ENCODE measurements at regions of chr22 and their contacts with region 1.

Region 1: DNA sequence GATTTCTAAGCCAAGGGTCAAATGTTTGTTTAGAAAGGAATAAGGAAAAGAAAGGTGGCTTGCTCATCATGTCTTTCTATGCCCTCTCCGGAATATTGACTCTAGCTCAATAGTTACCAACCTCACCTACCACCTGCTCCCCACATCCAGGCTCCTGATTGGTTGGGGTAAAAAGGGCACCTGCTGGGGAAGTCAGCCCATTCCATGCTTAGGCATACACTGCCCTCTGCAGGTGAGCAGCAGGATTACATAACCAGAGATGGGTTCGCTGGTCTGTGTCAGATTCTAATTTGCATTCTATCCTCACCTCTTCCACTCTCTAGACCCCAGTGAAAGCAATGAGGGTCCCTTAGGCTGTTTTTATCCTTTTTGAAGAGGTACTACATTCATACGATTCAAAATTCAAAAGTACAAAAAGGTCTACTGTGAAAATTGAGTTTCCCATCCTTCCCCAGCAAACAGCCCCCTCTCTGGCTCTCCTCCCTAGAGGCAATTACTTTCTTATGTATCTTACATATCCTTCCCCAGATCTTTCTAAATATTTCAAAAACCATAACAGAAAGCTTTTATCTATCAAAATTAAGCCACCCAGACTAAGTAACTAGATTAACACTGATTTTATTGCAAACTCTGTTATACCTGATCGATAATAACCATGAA is 98.0 kb upstream of the ASPHD2 start:
- DNase-seq: peak in 1 of 2 donors; percentile 64
- ATAC-seq: peak; percentile 72 to 82 (median 76)
- H3K4me3 ChIP-seq: no peak overlapping the region
- H3K27ac ChIP-seq: no peak overlapping the region
- H3K4me1 ChIP-seq: peaks cover 19% of the 10 kb centered on the region
- H3K27me3 ChIP-seq: no peaks in the 10 kb centered on the region
- CTCF ChIP-seq: peak; percentile 88

Region 2: DNA sequence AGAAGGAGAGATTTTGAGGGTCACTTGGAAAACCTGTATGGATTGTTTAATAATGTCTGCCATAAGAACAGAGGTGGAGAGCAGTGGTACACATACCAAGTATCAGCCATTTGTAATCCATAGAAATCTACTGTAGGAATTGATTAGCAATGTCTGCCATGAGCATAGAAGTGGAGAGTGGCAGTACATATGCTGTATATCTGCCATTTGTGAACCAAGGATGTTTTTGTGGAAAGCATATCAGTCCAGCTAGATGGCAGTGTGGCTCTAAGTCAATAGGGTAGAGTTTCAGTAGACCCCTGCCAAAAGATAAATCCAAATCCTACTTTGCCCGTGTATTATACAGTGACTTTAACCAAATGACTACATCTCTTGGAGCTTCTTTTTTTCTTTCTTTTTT is 244.7 kb before region 1 on chr22:
- intact Hi-C with region 1: loop called in 1 of 2 experiments (anchors 10 kb)
- DNase-seq: no peak
- ATAC-seq: peak in 1 of 4 donors; percentile 40
- H3K4me3 ChIP-seq: no peak overlapping the region
- H3K27ac ChIP-seq: no peak overlapping the region
- H3K4me1 ChIP-seq: no peaks in the 10 kb centered on the region
- H3K27me3 ChIP-seq: peaks cover 0 to 21% (median 0%) of the 10 kb centered on the region in 3 donors
- CTCF ChIP-seq: peak; percentile 18

Region 3: DNA sequence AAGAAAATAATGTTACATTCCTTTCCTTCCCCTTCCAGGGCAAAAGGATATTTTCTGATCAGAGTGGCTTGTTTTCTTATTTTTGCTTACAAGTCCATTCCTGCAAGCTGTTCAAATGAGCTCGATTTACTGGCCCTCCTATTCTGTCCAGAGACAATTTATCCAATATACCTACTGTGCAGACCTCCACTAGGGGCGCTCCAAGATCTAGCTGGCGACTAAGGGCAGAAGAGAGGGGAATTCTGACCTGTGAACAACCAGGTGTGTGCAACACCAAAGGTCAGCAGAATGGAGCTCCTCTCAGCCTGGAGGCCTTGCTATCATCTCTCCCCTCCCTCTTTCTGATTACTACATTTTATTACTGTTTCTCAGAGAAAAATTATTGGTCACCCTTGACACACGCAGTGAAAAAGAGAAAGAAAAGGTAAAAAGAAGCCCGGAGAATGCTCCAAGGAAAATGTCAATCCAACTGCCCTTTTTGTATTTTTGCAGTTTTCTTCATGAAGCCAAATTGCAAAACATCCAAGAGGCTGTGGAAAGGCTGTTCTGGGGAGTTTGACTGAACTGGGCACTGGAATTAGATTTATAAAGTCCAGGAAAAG is 158.6 kb before region 1 on chr22:
- intact Hi-C with region 1: loop called (anchors 2 kb)
- DNase-seq: peak; percentile 17 to 58
- ATAC-seq: peak; percentile 56 to 73 (median 64)
- H3K4me3 ChIP-seq: no peak overlapping the region
- H3K27ac ChIP-seq: no peak overlapping the region
- H3K4me1 ChIP-seq: peaks cover 5% of the 10 kb centered on the region
- H3K27me3 ChIP-seq: peaks cover 0 to 58% (median 15%) of the 10 kb centered on the region in 3 donors
- CTCF ChIP-seq: peak; percentile 62

Region 4: DNA sequence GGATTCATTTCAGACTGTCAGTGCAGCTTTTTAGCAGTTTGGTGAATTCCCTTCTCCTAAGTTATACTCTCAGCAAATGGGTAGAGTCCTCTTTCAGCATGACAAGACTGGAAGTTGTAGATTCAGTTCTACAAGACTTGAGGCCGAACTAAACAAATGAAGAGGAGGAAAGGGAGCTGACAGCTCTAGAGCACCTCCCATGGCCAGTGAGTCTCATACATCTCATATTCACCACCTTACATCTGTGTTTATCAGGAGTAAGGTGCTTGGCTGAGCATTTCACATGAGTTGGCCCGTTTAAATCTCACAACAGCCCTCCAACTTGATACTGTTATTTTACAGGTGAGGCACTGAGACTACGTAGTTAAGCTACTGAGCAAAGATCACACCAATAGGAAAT is 131.4 kb before region 1 on chr22:
- intact Hi-C with region 1: loop called (anchors 5 kb)
- DNase-seq: no peak
- ATAC-seq: no peak
- H3K4me3 ChIP-seq: no peak overlapping the region
- H3K27ac ChIP-seq: no peak overlapping the region
- H3K4me1 ChIP-seq: peaks cover 3% of the 10 kb centered on the region
- H3K27me3 ChIP-seq: no peaks in the 10 kb centered on the region
- CTCF ChIP-seq: no peak